ENCODE measurements at regions of chr18 and their contacts with region 1.

Region 1: GRCh38 chr18:23586249-23587196 is at the start of gene NPC1:
- DNase-seq: peak; percentile 77 to 97 (median 93)

Region 2: DNA sequence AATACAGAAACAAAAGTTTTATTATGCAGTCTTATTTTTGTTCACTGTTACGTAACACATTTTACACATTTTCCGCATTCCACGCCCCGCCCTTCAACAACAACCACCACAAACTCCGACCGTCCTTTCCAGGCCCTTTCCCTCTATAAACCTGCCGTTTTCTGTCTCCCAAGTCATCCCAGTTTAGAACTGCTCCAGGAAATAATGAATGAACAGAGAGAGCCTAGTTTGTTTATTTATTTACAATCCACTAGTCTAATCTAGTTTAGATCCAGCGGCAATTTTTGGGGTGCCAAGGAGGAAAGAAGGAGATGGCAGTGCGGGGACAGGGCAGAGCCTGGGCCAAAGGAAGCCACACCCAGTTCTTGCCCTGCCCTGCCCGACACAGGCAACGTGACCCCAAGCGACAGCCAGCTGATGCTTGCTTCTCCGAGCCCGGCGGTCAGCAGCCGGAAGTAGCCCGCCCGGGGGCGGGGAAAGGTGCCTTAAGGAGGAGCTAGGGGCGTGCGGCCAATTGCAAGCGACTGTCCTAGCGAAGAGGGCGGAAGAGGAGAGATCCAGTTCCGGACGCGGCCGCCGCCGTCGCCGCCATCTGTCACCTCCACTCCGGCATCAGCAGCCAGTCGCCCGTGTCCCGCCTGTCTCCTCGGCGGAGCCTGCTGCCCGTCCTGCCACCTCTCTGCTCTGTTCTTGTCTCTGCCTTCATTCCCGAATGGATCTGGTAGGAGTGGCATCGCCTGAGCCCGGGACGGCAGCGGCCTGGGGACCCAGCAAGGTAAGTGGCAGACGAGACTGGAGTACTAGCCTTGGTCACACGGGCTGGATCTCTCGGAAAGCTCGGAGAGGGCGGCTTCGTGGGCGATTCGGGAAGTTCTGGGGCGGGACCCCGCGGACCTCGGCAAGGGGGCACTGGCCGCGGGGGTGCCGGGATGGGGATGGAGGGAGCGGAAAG is 133.5 kb before region 1 on chr18 and contains the start of gene RIOK3:
- intact Hi-C with region 1: loop called (anchors 2 kb)
- DNase-seq: peak; percentile 96 to 99 (median 98)

Region 3: DNA sequence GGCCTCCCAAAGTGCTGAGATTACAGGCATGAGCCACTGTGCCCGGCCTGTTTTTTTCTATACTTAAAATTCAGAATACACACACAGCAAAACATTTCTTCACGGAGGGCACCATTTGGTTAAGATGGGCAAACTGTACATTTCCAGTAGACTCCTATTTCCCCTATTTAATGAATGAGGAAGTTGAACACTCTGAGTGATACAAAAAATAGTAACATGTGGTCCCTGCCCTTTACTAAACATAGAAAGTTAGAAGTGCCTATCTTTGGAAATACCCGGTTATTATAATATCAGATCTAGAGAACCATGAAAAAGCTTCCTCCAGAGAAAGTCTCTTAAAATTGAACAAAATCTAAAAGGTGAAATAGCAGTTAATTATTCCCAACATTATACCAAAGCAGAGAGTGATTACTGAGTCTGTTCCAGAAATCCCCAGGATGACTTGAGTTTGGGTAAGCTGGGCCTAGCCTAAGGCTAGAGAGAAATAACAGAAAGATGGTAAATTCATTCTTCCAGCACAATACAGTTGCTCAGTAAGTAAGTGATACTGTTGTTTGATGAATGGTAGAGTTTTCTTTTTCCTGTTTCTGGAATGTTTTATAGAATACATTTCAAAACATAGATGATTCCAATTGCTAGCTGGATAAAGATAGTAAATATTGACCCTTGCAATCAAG is 106.6 kb before region 1 on chr18:
- intact Hi-C with region 1: no loop called
- DNase-seq: no peak

Region 4: GRCh38 chr18:23515911-23516546 is 70.5 kb before region 1 on chr18:
- intact Hi-C with region 1: loop called (anchors 5 kb)
- DNase-seq: peak; percentile 54 to 93 (median 84)